Thyroid gland (tissue), 4 donors: ENCODE measurements at regions of chr16 and their contacts with region 1.

Region 1: GRCh38 chr16:48156790-48157209 is 1.0 kb upstream of the ABCC12 start:
- DNase-seq: peak; percentile 84 to 90
- H3K4me3 ChIP-seq: no peak overlapping the region
- H3K27ac ChIP-seq: no peak overlapping the region
- H3K4me1 ChIP-seq: peaks cover 0 to 12% of the 10 kb centered on the region in 2 donors
- H3K27me3 ChIP-seq: no peaks in the 10 kb centered on the region
- CTCF ChIP-seq: peak; percentile 81 to 94 (median 87)
- POLR2A ChIP-seq: no peak

Region 2: DNA sequence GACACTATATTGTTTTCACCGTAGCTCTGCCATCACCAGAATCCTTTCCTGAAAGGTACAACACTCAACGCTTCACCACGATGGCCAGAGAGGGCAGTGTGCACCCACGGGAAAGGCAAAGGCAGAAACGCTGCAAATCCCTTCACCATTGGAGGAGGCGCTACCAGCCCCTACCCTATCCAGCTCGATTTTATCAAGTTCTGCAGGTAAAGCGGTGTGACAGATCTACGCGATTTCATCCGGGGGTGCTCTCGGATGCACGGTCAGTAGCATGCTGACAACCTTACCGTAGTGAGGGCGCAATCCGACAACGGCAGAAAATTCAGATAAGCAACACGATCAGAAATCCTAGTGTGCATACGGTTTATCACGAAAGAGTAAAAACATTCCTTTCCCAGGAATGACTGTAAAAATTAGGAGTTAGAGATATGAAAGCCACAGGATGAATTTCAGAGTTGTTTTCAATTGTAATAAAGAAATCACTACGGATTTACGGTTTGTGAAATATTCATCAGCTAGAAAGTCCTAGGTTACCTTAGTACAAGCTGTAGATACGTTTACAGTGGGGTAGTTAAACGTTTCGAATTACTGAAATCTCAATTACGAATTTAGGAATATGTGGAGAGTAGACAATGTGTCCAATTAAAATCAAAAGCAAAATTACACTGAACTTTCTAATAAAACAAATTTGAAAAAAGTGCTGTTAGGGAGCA is 1014.9 kb before region 1 on chr16:
- intact Hi-C with region 1: loop called (anchors 5 kb)
- DNase-seq: peak; percentile 82 to 89
- H3K4me3 ChIP-seq: peak overlapping the region in 2 of 3 donors; percentile 49 to 61
- H3K27ac ChIP-seq: no peak overlapping the region
- H3K4me1 ChIP-seq: no peaks in the 10 kb centered on the region
- H3K27me3 ChIP-seq: no peaks in the 10 kb centered on the region
- CTCF ChIP-seq: peak; percentile 76 to 95 (median 91)
- POLR2A ChIP-seq: peak in 1 of 2 donors; percentile 54

Region 3: GRCh38 chr16:47939690-47940089 is 217.1 kb before region 1 on chr16:
- intact Hi-C with region 1: loop called (anchors 10 kb)
- DNase-seq: no peak
- H3K4me3 ChIP-seq: no peak overlapping the region
- H3K27ac ChIP-seq: no peak overlapping the region
- H3K4me1 ChIP-seq: no peaks in the 10 kb centered on the region
- H3K27me3 ChIP-seq: no peaks in the 10 kb centered on the region
- CTCF ChIP-seq: no peak
- POLR2A ChIP-seq: no peak